ENCODE measurements at regions of chr10 and their contacts with region 1.

Region 1: DNA sequence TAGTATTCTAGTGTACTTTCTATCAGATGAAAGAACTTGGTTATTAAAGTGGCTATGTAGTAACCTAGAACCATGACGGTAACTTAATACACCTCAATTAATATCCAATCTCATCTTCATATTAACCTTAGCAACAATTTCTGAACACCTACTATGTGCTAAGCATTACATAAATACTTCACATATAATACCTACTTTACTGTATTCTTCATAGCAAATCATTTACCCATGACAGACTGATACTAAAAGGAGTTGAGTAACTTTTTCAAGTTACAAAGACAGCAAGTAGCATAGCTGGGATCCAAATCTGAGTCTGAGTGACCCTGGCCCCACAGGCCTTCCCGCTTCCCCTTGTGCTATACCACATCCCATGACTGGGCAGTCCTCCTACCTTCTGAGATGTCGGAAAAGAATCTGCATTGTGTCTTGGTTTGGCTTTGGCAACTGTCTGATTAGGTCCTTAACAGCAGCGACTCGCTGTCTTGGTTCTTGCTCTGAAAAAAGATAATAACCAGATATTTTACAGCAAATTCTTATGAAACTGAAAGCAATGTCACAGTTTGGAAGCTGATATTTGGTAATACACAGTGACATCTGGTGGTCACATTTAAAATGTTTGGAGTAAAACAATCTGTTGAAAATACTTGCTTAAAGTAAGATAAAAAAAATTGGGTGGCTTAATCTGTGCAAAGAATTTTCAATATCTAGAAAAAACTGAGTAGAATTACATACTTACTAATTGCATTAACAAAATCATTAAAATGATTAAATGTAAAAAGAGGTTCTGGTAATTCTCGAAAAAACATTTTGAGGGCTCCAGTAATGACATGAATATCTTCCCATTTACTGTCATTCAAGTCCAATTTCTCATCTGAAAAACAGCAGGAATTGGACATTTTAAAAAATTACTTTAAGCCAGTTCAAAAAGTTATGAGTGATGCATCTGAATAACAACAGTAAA is 120.1 kb downstream of the ARHGAP12 start:
- DNase-seq: no peak
- ATAC-seq: peak; percentile 76

Region 2: GRCh38 chr10:30270247-30270646 is 1538.3 kb before region 1 on chr10:
- intact Hi-C with region 1: no loop called
- DNase-seq: no peak
- ATAC-seq: no peak

Region 3: DNA sequence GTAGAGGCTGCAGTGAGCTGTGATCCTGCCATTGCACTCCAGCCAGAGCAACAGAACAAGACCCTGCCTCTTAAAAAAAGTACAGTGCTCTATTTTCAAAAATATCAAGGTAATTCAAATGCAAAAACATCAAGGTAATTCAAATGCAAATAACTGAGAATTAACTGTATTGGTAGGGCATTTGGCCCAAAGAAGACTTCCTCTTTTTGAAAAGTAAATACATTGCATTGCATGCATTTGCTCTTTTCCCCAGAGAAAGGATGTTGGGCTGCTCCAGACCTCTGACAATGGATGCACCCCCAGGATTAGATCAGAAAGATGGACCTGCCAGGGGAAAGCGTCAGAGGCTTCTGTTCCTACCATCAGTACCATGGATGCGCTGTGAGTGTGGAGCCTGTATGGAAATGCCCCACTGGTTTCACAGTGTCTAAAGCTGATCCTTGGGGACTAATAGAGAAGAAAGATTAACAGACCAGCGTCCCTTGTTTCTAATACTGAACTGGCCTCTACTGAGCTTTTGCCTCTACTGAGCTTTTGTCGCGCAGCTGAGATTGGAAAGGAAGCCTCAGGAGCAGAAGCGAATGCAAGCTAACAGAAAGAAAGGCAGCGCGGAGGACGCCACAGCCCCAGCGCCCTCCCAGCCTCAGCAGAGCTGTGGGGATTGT is 1085.5 kb before region 1 on chr10:
- intact Hi-C with region 1: loop called (anchors 10 kb)
- DNase-seq: no peak
- ATAC-seq: no peak

Region 4: GRCh38 chr10:30751678-30752331 is 1056.7 kb before region 1 on chr10:
- intact Hi-C with region 1: loop called (anchors 2 kb)
- DNase-seq: peak; percentile 88
- ATAC-seq: peak; percentile 78

Measured in Right ventricle myocardium inferior (tissue), 1 donor.